Heart left ventricle (tissue), 16 donors: ENCODE measurements at regions of chr15 and their contacts with region 1.

Region 1: GRCh38 chr15:26391567-26392194 is 381.2 kb downstream of the GABRB3 start:
- DNase-seq: peak in 1 of 5 donors; percentile 14
- ATAC-seq: peak in 3 of 4 donors; percentile 28 to 65 (median 29)
- H3K4me3 ChIP-seq: no peak overlapping the region
- H3K27ac ChIP-seq: peak overlapping the region in 3 of 12 donors; percentile 11 to 53 (median 32)
- H3K4me1 ChIP-seq: peaks cover 0 to 25% (median 0%) of the 10 kb centered on the region in 12 donors
- H3K27me3 ChIP-seq: no peaks in the 10 kb centered on the region
- CTCF ChIP-seq: no peak
- POLR2A ChIP-seq: no peak

Region 2: DNA sequence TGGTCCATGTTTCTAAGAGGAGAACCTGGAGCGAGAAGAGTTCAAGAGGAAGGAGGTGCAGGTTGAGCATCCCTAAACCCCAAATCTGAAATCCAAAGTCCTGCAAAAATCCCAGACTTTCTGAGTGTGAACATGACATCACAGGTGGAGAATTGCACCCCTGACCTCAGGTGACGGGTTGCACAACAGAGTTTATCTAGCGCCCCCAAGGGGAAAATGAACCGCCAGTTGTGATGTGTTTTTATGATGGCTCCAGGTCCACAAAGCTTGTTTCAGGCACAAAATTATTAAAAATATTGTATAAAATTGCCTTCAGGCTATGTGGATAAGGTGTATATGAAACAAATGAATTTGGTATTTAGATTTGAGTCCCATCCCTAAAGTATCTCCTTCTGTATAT is 38.8 kb before region 1 on chr15:
- intact Hi-C with region 1: loop called in 1 of 10 experiments (anchors 5 kb)
- DNase-seq: no peak
- ATAC-seq: no peak
- H3K4me3 ChIP-seq: no peak overlapping the region
- H3K27ac ChIP-seq: no peak overlapping the region
- H3K4me1 ChIP-seq: no peaks in the 10 kb centered on the region
- H3K27me3 ChIP-seq: no peaks in the 10 kb centered on the region
- CTCF ChIP-seq: no peak
- POLR2A ChIP-seq: no peak

Region 3: DNA sequence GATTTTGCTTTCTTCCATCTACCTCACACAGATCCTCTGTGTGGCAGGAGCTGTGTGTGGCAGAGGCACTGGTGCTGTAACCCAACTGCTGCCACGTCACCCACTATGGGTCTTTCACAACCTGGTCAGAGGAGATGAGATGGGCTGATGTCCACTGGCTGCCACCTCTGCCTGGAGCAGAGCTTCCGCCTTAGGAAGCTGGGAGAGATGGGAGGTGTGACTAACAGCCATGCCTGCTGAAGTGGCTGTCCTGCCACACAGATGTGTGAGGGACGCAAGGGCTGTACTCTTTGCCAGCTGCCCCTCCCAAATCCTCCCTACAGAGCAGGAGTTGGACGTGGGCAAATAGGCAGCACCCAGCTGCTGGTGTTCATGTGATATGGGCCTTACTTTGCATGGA is 51.6 kb after region 1 on chr15:
- intact Hi-C with region 1: loop called in 2 of 10 experiments (anchors 5 kb)
- DNase-seq: peak in 3 of 5 donors; percentile 46 to 80 (median 72)
- ATAC-seq: peak; percentile 66 to 97 (median 88)
- H3K4me3 ChIP-seq: no peak overlapping the region
- H3K27ac ChIP-seq: peak overlapping the region in 2 of 12 donors; percentile 39 to 63
- H3K4me1 ChIP-seq: peaks cover 0 to 18% (median 0%) of the 10 kb centered on the region in 12 donors
- H3K27me3 ChIP-seq: no peaks in the 10 kb centered on the region
- CTCF ChIP-seq: no peak
- POLR2A ChIP-seq: no peak